ENCODE measurements at regions of chr19 and their contacts with region 1.

Region 1: GRCh38 chr19:15971222-15971780 is 22.5 kb downstream of the OR10H4 start:
- DNase-seq: no peak
- H3K4me3 ChIP-seq: no peak overlapping the region
- H3K27ac ChIP-seq: no peak overlapping the region
- H3K4me1 ChIP-seq: no peaks in the 10 kb centered on the region
- H3K27me3 ChIP-seq: no peaks in the 10 kb centered on the region
- CTCF ChIP-seq: peak in 1 of 2 donors; percentile 38

Region 2: DNA sequence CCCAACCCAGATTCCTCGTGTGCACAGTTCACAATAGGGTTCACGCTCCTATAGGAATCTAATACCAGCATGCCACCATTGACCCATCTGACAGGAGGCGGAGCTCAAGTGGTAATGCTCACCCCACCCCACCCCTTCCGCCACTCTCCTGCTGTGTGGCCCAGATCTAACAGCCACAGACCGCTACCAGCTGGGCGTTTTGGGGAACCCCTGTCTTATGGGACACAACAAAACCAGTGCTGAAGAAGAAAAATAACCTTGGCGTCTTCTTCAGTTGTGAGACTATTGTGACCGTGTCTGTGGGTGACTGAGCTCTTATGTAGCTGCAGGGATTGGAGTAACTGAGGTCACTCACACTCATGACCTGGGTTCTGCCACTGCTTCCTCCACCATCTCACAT is 150.7 kb before region 1 on chr19:
- CTCF ChIA-PET with region 1: no interaction called
- dilution Hi-C with region 1: no loop called
- in situ Hi-C with region 1: no loop called
- intact Hi-C with region 1: loop called (anchors 2 kb)
- DNase-seq: no peak
- H3K4me3 ChIP-seq: no peak overlapping the region
- H3K27ac ChIP-seq: no peak overlapping the region
- H3K4me1 ChIP-seq: no peaks in the 10 kb centered on the region
- H3K27me3 ChIP-seq: no peaks in the 10 kb centered on the region
- CTCF ChIP-seq: no peak

Region 3: GRCh38 chr19:16035601-16036297 is 64.4 kb after region 1 on chr19:
- CTCF ChIA-PET with region 1: no interaction called
- dilution Hi-C with region 1: loop called (anchors 5 kb)
- in situ Hi-C with region 1: no loop called
- intact Hi-C with region 1: no loop called
- DNase-seq: no peak
- H3K4me3 ChIP-seq: no peak overlapping the region
- H3K27ac ChIP-seq: no peak overlapping the region
- H3K4me1 ChIP-seq: no peaks in the 10 kb centered on the region
- H3K27me3 ChIP-seq: no peaks in the 10 kb centered on the region
- CTCF ChIP-seq: no peak